Mammary epithelial cell (primary cell): ENCODE measurements at regions of chr19 and their contacts with region 1.

Region 1: GRCh38 chr19:30395283-30395682 is 23.1 kb downstream of the ZNF536 start:
- DNase-seq: no peak
- H3K4me3 ChIP-seq: no peak overlapping the region
- H3K27ac ChIP-seq: no peak overlapping the region
- H3K4me1 ChIP-seq: no peaks in the 10 kb centered on the region
- H3K27me3 ChIP-seq: no peaks in the 10 kb centered on the region
- CTCF ChIP-seq: no peak

Region 2: GRCh38 chr19:30437869-30438268 is 42.6 kb after region 1 on chr19:
- CTCF ChIA-PET with region 1: no interaction called
- dilution Hi-C with region 1: no loop called
- in situ Hi-C with region 1: no loop called
- intact Hi-C with region 1: no loop called
- DNase-seq: no peak
- H3K4me3 ChIP-seq: no peak overlapping the region
- H3K27ac ChIP-seq: no peak overlapping the region
- H3K4me1 ChIP-seq: no peaks in the 10 kb centered on the region
- H3K27me3 ChIP-seq: no peaks in the 10 kb centered on the region
- CTCF ChIP-seq: no peak

Region 3: DNA sequence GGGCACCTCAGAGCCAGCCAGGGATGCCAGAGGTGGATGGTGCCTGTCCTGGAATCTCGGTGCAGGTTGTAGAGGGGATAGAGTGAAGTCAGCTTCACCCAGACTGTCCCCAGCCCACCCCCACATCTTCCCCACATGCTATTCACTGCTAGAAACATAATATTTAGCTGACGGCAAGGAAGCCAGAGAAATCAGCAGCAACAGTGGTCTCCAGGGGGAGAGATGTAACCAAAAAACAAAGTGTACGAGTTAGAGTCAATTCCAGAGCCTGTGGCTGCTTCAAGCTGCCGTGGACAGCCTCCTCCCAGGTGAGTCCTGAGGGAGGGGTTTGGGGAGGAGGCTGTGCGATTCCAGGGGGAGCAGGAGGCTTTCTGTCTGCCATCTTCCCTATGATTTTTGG is 74.5 kb after region 1 on chr19:
- CTCF ChIA-PET with region 1: no interaction called
- dilution Hi-C with region 1: loop called (anchors 5 kb)
- in situ Hi-C with region 1: no loop called
- intact Hi-C with region 1: no loop called
- DNase-seq: no peak
- H3K4me3 ChIP-seq: no peak overlapping the region
- H3K27ac ChIP-seq: no peak overlapping the region
- H3K4me1 ChIP-seq: no peaks in the 10 kb centered on the region
- H3K27me3 ChIP-seq: no peaks in the 10 kb centered on the region
- CTCF ChIP-seq: no peak

Region 4: GRCh38 chr19:30669329-30670010 is 274.2 kb after region 1 on chr19:
- CTCF ChIA-PET with region 1: no interaction called
- dilution Hi-C with region 1: no loop called
- in situ Hi-C with region 1: no loop called
- intact Hi-C with region 1: no loop called
- DNase-seq: peak; percentile 62
- H3K4me3 ChIP-seq: no peak overlapping the region
- H3K27ac ChIP-seq: no peak overlapping the region
- H3K4me1 ChIP-seq: peaks cover 6% of the 10 kb centered on the region
- H3K27me3 ChIP-seq: peaks cover 1% of the 10 kb centered on the region
- CTCF ChIP-seq: peak; percentile 66 to 84